ENCODE measurements at regions of chrX and their contacts with region 1.

Region 1: GRCh38 chrX:32530802-32531403 is 680.4 kb downstream of the DMD start:
- DNase-seq: peak in 2 of 6 donors; percentile 12 to 17
- ATAC-seq: peak in 1 of 4 donors; percentile 52
- H3K4me3 ChIP-seq: no peak overlapping the region
- H3K27ac ChIP-seq: no peak overlapping the region
- H3K4me1 ChIP-seq: peaks cover 0 to 3% (median 0%) of the 10 kb centered on the region in 3 donors
- H3K27me3 ChIP-seq: peaks cover 0 to 8% (median 2%) of the 10 kb centered on the region in 4 donors
- CTCF ChIP-seq: peak; percentile 12 to 49 (median 38)

Region 2: GRCh38 chrX:32644476-32645245 is 113.8 kb after region 1 on chrX:
- intact Hi-C with region 1: no loop called
- DNase-seq: no peak
- ATAC-seq: no peak
- H3K4me3 ChIP-seq: no peak overlapping the region
- H3K27ac ChIP-seq: no peak overlapping the region
- H3K4me1 ChIP-seq: no peaks in the 10 kb centered on the region
- H3K27me3 ChIP-seq: peaks cover 0 to 12% (median 0%) of the 10 kb centered on the region in 4 donors
- CTCF ChIP-seq: no peak

Region 3: DNA sequence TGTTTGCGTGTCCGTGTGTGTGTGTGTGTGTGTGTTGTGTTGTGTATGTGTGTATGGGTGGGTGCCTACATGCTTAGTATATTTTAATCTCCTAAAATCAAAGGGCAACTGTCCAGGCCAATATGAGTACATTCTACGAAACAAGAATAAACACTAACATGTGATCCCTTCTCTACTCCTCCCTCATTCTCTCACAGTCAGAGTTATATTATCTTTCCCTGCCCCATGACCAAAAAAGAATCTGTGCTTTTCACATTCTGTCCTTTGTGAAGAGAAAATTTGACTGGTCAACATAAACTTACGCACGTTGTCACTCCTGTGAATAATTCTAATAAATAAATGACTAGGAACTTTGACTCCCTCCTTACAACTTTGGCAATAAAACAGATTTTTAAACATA is 147.6 kb after region 1 on chrX:
- intact Hi-C with region 1: no loop called
- DNase-seq: no peak
- ATAC-seq: no peak
- H3K4me3 ChIP-seq: no peak overlapping the region
- H3K27ac ChIP-seq: no peak overlapping the region
- H3K4me1 ChIP-seq: no peaks in the 10 kb centered on the region
- H3K27me3 ChIP-seq: no peaks in the 10 kb centered on the region
- CTCF ChIP-seq: no peak

Region 4: DNA sequence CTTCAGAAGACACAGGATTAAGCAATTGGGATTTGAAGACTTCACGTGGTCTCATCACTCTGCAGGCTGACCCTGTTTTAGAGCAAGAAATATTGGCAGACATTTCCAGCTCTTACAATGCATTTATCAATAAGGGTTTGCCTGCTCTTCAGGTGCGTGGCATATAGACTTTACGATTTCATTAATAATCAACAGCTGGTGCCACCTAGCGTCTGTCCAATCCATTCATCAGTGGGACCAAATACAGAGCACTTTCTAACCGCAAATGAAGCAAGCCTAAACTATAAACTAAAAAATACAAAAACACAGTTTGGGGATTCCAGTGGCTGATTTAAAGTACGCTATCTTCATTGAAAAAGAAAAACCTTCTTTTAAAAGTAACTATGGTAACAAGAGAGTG is 805.9 kb after region 1 on chrX:
- intact Hi-C with region 1: loop called in 1 of 3 experiments (anchors 10 kb)
- DNase-seq: peak in 1 of 6 donors; percentile 14
- ATAC-seq: peak in 3 of 4 donors; percentile 60 to 65 (median 64)
- H3K4me3 ChIP-seq: no peak overlapping the region
- H3K27ac ChIP-seq: no peak overlapping the region
- H3K4me1 ChIP-seq: no peaks in the 10 kb centered on the region
- H3K27me3 ChIP-seq: peaks cover 0 to 28% (median 5%) of the 10 kb centered on the region in 4 donors
- CTCF ChIP-seq: peak in 1 of 4 donors; percentile 27